BJ (cell line): ENCODE measurements at regions of chr9 and their contacts with region 1.

Region 1: DNA sequence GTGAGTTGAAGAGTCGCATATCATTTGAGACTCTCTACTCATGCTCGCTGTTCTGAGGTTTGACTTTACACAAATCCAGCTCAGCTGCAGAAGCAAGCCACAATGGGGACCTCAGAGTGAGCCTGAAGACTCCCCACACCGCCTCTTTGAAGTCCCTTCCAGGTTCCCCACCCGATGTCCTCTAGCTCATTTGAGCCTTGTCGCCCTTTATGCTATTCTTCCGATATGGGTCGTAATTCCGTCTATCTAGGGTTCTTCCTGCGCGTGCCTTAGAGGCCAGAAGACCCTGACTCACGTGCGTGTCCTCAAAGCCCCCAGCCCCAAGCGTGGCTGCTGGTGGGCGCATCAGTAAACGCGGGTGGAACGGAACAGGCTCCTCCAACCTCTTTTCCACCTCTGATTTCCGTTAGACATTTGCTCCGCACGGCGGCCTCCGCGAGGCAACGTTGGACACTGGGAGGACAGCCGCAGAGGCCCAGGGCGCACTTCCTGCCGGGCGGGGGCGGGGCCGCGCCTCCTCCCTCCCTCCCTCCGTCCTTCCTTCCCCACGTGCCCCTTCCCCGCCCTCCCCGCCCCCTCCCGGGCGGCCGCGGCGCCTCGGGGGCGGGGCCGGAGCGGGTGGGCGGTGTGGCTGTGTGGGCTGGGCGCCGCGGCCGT is at the start of gene SNX30:
- DNase-seq: no peak
- H3K4me3 ChIP-seq: peak within 1 kb of the TSS; percentile 91
- H3K27me3 ChIP-seq: no peaks in the 10 kb centered on the region
- CTCF ChIP-seq: 0 out of 2 replicates have a peak, but pooled peaks have one; percentile 18
- polyA plus RNA-seq, gene SNX30: 6.1 and 9.1 TPM in 2 replicates

Region 2: GRCh38 chr9:112689161-112689740 is 61.0 kb before region 1 on chr9:
- CTCF ChIA-PET with region 1: no interaction called
- POLR2A ChIA-PET with region 1: no interaction called
- DNase-seq: no peak
- H3K4me3 ChIP-seq: no peak overlapping the region
- H3K27me3 ChIP-seq: no peaks in the 10 kb centered on the region
- CTCF ChIP-seq: no peak

Region 3: DNA sequence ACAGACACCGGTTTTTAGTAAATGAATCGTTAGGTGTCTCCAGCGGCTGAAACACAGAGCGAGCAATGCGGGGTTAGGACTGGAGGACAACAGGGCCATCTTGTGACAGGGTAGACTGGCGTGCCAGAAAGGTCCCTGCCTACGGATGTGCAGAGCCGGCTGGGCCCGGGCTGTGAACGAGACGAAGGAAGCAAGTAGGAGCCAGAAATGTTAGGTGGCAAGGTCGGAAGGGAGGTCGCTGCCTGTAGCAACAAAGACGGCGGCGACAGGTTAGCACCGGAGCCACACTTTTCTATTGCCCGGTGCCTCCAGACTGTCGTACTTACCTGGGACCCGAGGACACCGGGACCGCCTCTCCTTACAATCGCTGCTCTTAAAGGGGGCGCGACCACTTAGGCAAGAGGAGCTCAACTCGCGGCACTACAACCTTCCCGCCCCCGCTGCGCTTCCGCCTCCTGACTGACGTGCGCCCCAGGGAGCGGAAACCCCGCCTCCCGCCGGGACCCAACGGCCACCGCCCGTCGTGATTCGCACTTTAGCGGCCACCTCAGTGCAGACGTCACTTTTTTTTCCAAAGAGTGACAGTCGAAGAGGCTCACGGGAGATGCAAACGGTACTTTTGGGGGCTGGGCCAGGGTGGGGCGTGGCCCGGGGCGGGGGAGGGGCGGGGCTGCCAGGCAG is 32.4 kb before region 1 on chr9 and contains the start of gene INIP:
- CTCF ChIA-PET with region 1: interaction called, 5 read pairs
- POLR2A ChIA-PET with region 1: interaction called, 19 read pairs
- DNase-seq: peak; percentile 77
- H3K4me3 ChIP-seq: peak within 1 kb of the TSS; percentile 77
- H3K27me3 ChIP-seq: no peaks in the 10 kb centered on the region
- CTCF ChIP-seq: 0 out of 2 replicates have a peak, but pooled peaks have one; percentile 12
- polyA plus RNA-seq, gene INIP: 10.9 and 23.8 TPM in 2 replicates

Region 4: GRCh38 chr9:112731971-112732370 is 18.3 kb before region 1 on chr9:
- CTCF ChIA-PET with region 1: no interaction called
- POLR2A ChIA-PET with region 1: no interaction called
- DNase-seq: no peak
- H3K4me3 ChIP-seq: no peak overlapping the region
- H3K27me3 ChIP-seq: no peaks in the 10 kb centered on the region
- CTCF ChIP-seq: no peak

Region 5: DNA sequence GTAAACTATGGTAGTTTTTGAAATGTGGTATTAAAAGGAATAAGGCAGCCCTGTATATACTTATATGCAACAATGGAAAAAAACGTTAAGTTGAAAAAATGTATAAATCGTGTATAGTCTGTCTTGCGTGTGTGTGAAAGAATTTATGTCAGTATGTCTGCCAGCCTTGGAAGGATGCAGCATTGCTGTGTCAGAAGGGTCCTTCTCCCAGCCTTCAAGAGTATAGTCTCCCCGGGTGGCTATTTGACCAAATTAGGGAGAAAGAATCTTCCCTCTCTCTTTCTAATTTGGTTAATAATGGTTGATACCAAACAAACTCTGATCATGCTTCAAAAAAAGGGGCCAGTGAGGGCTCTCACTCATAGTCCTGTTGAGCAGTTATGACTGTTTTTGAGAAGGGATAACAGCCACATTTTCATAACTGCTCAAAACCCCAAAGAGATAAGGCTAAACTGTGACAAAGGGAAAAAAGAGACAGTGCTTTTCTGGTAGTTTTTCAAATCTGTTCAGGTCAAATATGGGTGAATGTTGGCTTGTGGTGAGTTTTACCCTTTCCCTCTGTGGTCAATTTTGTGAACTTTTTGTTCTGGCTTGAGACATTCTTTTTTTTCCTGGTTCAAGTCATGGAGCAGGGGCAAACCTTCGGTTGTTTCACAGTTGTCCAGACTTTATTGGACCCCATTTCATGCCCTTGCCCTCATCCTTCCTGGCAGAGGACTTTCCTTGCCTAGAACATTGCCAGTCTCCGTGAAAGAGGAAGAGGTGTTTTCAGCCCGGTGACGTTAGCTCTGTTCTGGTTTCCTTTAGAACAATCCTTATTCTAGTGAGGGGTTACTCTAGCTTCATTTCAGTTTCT is 21.3 kb after region 1 on chr9:
- CTCF ChIA-PET with region 1: no interaction called
- POLR2A ChIA-PET with region 1: no interaction called
- DNase-seq: no peak
- H3K4me3 ChIP-seq: no peak overlapping the region
- H3K27me3 ChIP-seq: no peaks in the 10 kb centered on the region
- CTCF ChIP-seq: no peak

Region 6: DNA sequence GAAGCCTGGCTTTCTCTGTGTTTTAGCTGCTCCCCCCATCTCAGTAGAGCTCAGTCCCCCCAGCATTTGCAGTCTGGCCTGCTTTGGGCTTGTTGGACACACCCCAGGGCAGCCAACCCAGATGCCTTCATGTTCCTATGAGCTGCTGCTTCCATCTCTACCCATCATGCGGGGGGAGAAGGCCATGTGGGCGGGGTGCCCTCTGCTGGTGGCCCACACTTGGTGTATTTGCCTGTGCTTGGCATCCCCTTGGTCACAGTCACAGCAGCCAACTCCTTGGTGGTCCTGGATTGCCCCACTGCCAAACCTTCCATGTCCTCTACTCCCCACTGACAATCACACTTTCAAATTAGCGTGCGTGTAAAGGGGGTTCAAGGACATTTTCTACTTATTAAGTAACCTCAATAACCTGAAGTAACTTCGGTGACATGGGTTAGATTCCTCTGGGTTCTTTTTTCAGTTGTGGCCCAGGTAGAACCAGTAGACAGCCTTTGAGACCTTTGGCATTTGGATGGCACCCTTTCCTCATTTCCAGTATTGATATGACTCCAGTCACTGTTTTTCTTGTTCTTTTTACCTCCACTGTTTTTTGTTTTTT is 43.1 kb after region 1 on chr9:
- CTCF ChIA-PET with region 1: interaction called, 15 read pairs
- POLR2A ChIA-PET with region 1: no interaction called
- DNase-seq: no peak
- H3K4me3 ChIP-seq: no peak overlapping the region
- H3K27me3 ChIP-seq: no peaks in the 10 kb centered on the region
- CTCF ChIP-seq: peak; percentile 87